CD14-positive monocyte (primary cell): ENCODE measurements at regions of chr3 and their contacts with region 1.

Region 1: GRCh38 chr3:32421991-32422859 is 30.6 kb downstream of the CMTM7 start:
- DNase-seq: peak; percentile 59 to 76 (median 68)
- H3K4me3 ChIP-seq: peak overlapping the region in 1 of 3 experiments; percentile 34
- H3K4me3 Mint-ChIP-seq: peak overlapping the region in 1 of 2 donors; percentile 84
- H3K27ac ChIP-seq: peak overlapping the region; percentile 76 to 86
- H3K27ac Mint-ChIP-seq: peak overlapping the region; percentile 90 to 97 (median 94)
- H3K4me1 ChIP-seq: peaks cover 61 to 68% of the 10 kb centered on the region in 2 donors
- H3K4me1 Mint-ChIP-seq: peaks cover 70% of the 10 kb centered on the region
- H3K27me3 ChIP-seq: no peaks in the 10 kb centered on the region
- H3K27me3 Mint-ChIP-seq: peaks cover 0 to 5% (median 0%) of the 10 kb centered on the region in 3 donors
- CTCF ChIP-seq: no peak

Region 2: GRCh38 chr3:32406486-32407408 is 15.5 kb before region 1 on chr3:
- intact Hi-C with region 1: loop called in 1 of 2 experiments (anchors 2 kb)
- DNase-seq: peak; percentile 64 to 88 (median 72)
- H3K4me3 ChIP-seq: peak overlapping the region in 2 of 3 experiments; percentile 14 to 57
- H3K4me3 Mint-ChIP-seq: peak overlapping the region; percentile 47 to 75
- H3K27ac ChIP-seq: peak overlapping the region; percentile 76 to 88
- H3K27ac Mint-ChIP-seq: peak overlapping the region; percentile 83 to 95 (median 92)
- H3K4me1 ChIP-seq: peaks cover 93 to 94% of the 10 kb centered on the region in 2 donors
- H3K4me1 Mint-ChIP-seq: peaks cover 96% of the 10 kb centered on the region
- H3K27me3 ChIP-seq: no peaks in the 10 kb centered on the region
- H3K27me3 Mint-ChIP-seq: no peaks in the 10 kb centered on the region
- CTCF ChIP-seq: no peak

Region 3: GRCh38 chr3:32467333-32468070 is 45.3 kb after region 1 on chr3:
- intact Hi-C with region 1: no loop called
- DNase-seq: peak; percentile 55 to 65 (median 59)
- H3K4me3 ChIP-seq: peak overlapping the region; percentile 33 to 79 (median 50)
- H3K4me3 Mint-ChIP-seq: peak overlapping the region; percentile 69 to 79
- H3K27ac ChIP-seq: no peak overlapping the region
- H3K27ac Mint-ChIP-seq: peak overlapping the region in 4 of 7 donors; percentile 3 to 44 (median 24)
- H3K4me1 ChIP-seq: peaks cover 24 to 28% of the 10 kb centered on the region in 2 donors
- H3K4me1 Mint-ChIP-seq: peaks cover 46% of the 10 kb centered on the region
- H3K27me3 ChIP-seq: no peaks in the 10 kb centered on the region
- H3K27me3 Mint-ChIP-seq: peaks cover 0 to 1% (median 0%) of the 10 kb centered on the region in 3 donors
- CTCF ChIP-seq: peak; percentile 99